Mucosa of descending colon (tissue), 3 donors: ENCODE measurements at regions of chr10 and their contacts with region 1.

Region 1: DNA sequence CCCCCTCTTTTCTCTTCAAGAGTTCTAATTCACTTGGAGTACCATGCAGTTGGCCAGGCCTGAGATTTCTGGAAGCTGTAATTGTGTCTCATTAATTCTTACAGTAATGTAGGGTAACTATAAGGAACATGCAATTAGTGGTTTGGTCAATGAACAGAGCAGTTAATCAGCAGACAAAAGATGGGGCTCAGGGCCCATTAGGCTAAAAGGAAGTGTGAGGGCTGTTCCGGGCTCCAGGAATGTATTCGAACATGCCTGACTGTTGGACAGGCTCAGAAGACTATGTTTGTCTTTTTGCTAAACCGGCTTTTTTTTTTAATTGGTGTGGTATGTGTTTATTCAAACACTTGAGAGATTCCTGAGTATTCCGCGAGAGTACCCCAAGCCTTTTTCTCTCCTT is 42.5 kb upstream of the FZD8 start:
- DNase-seq: no peak
- ATAC-seq: no peak
- H3K4me3 ChIP-seq: no peak overlapping the region
- H3K4me1 ChIP-seq: peaks cover 6% of the 10 kb centered on the region
- CTCF ChIP-seq: no peak

Region 2: GRCh38 chr10:36662571-36662970 is 978.0 kb after region 1 on chr10:
- intact Hi-C with region 1: loop called in 1 of 2 experiments (anchors 5 kb)
- DNase-seq: no peak
- ATAC-seq: no peak
- H3K4me3 ChIP-seq: no peak overlapping the region
- H3K4me1 ChIP-seq: no peaks in the 10 kb centered on the region
- CTCF ChIP-seq: no peak